ENCODE measurements at regions of chr6 and their contacts with region 1.

Region 1: DNA sequence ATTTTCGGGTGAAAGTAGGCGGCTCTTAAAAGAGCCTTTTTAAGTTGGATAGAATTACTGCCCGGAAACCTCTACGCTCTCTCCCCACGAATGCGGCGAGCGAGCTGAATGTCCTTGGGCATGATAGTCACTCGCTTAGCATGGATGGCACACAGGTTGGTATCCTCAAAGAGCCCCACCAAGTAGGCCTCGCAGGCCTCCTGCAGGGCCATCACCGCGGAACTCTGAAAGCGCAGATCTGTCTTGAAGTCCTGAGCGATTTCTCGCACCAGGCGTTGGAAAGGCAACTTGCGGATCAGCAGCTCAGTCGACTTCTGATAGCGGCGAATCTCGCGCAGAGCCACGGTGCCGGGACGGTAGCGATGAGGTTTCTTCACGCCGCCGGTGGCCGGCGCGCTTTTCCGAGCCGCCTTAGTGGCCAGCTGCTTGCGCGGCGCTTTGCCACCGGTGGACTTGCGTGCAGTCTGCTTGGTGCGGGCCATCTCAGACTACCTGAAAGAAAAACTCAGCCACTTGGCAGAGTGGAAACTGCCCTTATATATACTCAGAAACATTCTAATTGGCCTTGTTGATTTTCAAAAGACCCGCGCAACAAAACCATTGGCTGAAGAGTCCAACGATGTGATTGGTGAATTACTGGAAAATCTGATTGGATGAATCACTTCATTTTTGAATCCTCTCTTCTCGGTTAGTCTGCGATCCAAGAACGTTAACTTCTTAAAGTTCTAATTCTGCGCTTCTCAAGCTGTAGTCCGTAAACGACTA is 93.9 kb upstream of the BTN3A2 start:
- DNase-seq: peak in 1 of 2 donors; percentile 87
- H3K4me3 ChIP-seq: peak overlapping the region; percentile 54 to 72
- H3K27ac ChIP-seq: peak overlapping the region; percentile 93 to 95
- H3K4me1 ChIP-seq: peaks cover 0 to 10% of the 10 kb centered on the region in 2 donors
- H3K27me3 ChIP-seq: no peaks in the 10 kb centered on the region
- CTCF ChIP-seq: no peak

Region 2: GRCh38 chr6:26196846-26197648 is 74.0 kb before region 1 on chr6:
- intact Hi-C with region 1: loop called (anchors 2 kb)
- DNase-seq: peak; percentile 64 to 91
- H3K4me3 ChIP-seq: peak overlapping the region; percentile 62 to 86
- H3K27ac ChIP-seq: peak overlapping the region; percentile 92 to 95
- H3K4me1 ChIP-seq: peaks cover 4 to 13% of the 10 kb centered on the region in 2 donors
- H3K27me3 ChIP-seq: no peaks in the 10 kb centered on the region
- CTCF ChIP-seq: no peak

Region 3: GRCh38 chr6:26234421-26235296 is 36.4 kb before region 1 on chr6:
- intact Hi-C with region 1: no loop called
- DNase-seq: peak in 1 of 2 donors; percentile 77
- H3K4me3 ChIP-seq: peak overlapping the region; percentile 61 to 79
- H3K27ac ChIP-seq: peak overlapping the region; percentile 84 to 86
- H3K4me1 ChIP-seq: peaks cover 0 to 7% of the 10 kb centered on the region in 2 donors
- H3K27me3 ChIP-seq: no peaks in the 10 kb centered on the region
- CTCF ChIP-seq: no peak

Region 4: DNA sequence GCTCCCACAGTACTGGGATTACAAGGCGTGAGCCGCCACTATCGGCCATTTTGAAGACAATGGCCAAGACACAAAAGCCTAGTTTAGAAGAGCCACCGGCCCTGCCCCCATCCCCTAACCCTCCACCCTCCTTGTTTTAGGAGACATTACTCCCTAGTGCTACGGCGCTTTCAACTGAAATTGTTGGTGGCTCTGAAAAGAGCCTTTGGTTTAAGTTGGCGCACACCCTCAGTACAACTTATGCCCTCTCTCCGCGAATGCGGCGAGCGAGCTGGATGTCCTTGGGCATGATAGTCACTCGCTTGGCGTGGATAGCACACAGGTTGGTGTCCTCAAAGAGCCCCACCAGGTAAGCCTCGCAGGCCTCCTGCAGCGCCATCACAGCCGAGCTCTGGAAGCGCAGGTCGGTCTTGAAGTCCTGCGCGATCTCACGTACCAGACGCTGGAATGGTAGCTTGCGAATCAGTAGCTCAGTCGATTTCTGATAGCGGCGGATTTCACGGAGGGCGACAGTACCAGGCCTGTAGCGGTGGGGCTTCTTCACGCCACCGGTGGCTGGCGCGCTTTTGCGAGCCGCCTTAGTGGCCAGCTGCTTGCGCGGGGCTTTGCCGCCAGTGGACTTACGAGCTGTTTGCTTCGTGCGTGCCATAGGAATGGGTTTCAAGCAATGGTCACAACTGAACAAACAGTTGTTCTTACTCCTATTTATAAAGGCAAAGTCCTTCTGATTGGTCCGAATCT is 21.0 kb before region 1 on chr6:
- intact Hi-C with region 1: loop called (anchors 2 kb)
- DNase-seq: peak in 1 of 2 donors; percentile 72
- H3K4me3 ChIP-seq: peak overlapping the region; percentile 57 to 74
- H3K27ac ChIP-seq: peak overlapping the region; percentile 13 to 54
- H3K4me1 ChIP-seq: peaks cover 0 to 10% of the 10 kb centered on the region in 2 donors
- H3K27me3 ChIP-seq: peaks cover 5% of the 10 kb centered on the region
- CTCF ChIP-seq: no peak

Region 5: GRCh38 chr6:26295691-26296555 is 24.8 kb after region 1 on chr6:
- intact Hi-C with region 1: no loop called
- DNase-seq: no peak
- H3K4me3 ChIP-seq: no peak overlapping the region
- H3K27ac ChIP-seq: no peak overlapping the region
- H3K4me1 ChIP-seq: no peaks in the 10 kb centered on the region
- H3K27me3 ChIP-seq: no peaks in the 10 kb centered on the region
- CTCF ChIP-seq: no peak

Region 6: DNA sequence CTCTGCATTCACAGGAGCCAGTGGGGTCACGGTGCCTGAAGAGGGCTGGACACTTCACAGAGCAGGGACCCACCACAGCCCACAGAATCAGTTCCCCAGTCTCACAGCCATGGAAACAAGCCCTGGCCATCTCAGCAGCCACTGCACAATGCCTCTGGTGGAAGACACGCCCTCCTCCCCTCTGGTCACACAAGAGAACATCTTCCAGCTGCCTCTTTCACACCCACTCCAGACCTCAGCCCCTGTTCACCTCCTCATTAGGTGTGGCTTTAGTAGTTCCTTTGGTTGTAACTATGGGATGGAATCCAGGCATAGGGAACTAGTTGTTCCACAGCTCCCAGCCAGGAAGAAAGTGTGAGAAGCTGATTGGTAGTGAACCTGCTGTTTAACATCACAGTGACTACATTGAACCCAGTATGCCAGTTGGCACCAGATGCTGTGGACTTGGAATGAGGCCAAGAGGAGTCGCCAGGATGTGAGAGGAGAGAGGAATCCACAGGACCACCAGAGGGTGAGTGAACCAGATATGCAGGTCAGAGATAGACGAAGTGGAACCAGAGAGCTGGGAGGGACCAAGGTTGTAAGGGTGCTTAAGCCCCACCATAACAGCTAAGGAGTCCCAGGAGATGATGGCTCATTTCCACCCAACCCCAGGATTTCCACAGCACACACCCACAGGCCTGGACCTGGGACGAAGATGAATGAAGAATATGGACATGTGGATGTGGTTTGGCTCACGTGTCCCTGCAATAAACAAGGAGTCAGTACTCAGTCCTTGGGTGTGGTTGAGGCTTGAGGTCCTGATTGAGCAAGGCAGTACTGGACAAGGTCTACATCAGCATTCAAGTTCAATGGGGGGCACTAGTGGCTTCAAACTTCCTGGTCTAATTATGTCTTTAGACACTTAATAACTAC is 160.4 kb after region 1 on chr6:
- intact Hi-C with region 1: no loop called
- DNase-seq: peak in 1 of 2 donors; percentile 70
- H3K4me3 ChIP-seq: no peak overlapping the region
- H3K27ac ChIP-seq: peak overlapping the region; percentile 47 to 64
- H3K4me1 ChIP-seq: peaks cover 4 to 13% of the 10 kb centered on the region in 2 donors
- H3K27me3 ChIP-seq: no peaks in the 10 kb centered on the region
- CTCF ChIP-seq: no peak

Region 7: GRCh38 chr6:26537846-26538571 is 266.9 kb after region 1 on chr6 and contains the start of gene HMGN4:
- intact Hi-C with region 1: loop called (anchors 5 kb)
- DNase-seq: peak in 1 of 2 donors; percentile 90
- H3K4me3 ChIP-seq: peak within 1 kb of the TSS; percentile 89 to 98
- H3K27ac ChIP-seq: peak within 1 kb of the TSS; percentile 92 to 99
- H3K4me1 ChIP-seq: peaks cover 5 to 32% of the 10 kb centered on the region in 2 donors
- H3K27me3 ChIP-seq: no peaks in the 10 kb centered on the region
- CTCF ChIP-seq: peak in 1 of 3 experiments; percentile 12
- total RNA-seq, gene HMGN4: 20.6 TPM